H1 (cell line): ENCODE measurements at regions of chr3 and their contacts with region 1.

Region 1: GRCh38 chr3:50235716-50236496 is at the start of gene GNAI2:
- DNase-seq: peak; percentile 95 to 96
- H3K4me3 ChIP-seq: peak within 1 kb of the TSS; percentile 86 to 93 (median 90)
- H3K27ac ChIP-seq: 0 out of 2 replicates have a peak within 1 kb of the TSS, but pooled peaks have one; percentile 61
- H3K4me1 ChIP-seq: peaks cover 6 to 39% (median 36%) of the 10 kb centered on the region in 4 experiments
- H3K27me3 ChIP-seq: no peaks in the 10 kb centered on the region; a peak in 1 of 7 replicates
- CTCF ChIP-seq: no peak
- EP300 ChIP-seq: no peak
- POLR2A ChIP-seq: peak in 1 of 2 experiments; percentile 77; a peak in 2 of 3 replicates
- RAD21 ChIP-seq: no peak
- total RNA-seq, gene GNAI2: 168 and 169 TPM in 2 replicates

Region 2: GRCh38 chr3:50254577-50255250 is 18.8 kb after region 1 on chr3:
- CTCF ChIA-PET with region 1: interaction called, 2,149 read pairs
- POLR2A ChIA-PET with region 1: interaction called, 22 read pairs
- DNase-seq: no peak
- H3K4me3 ChIP-seq: no peak overlapping the region
- H3K27ac ChIP-seq: no peak overlapping the region
- H3K4me1 ChIP-seq: peaks cover 0 to 3% (median 2%) of the 10 kb centered on the region in 4 experiments; a peak in 4 of 7 replicates
- H3K27me3 ChIP-seq: no peaks in the 10 kb centered on the region
- CTCF ChIP-seq: no peak
- EP300 ChIP-seq: no peak
- POLR2A ChIP-seq: no peak
- RAD21 ChIP-seq: no peak